Activated naive CD4-positive, alpha-beta T cell treated with anti-CD3 and anti-CD28 coated beads for 36 hours (primary cell): ENCODE measurements at regions of chr17 and their contacts with region 1.

Region 1: GRCh38 chr17:75109407-75110233 is at the start of gene ARMC7:
- DNase-seq: peak; percentile 93
- H3K4me3 Mint-ChIP-seq: peak within 1 kb of the TSS; percentile 90
- H3K27ac Mint-ChIP-seq: peak within 1 kb of the TSS; percentile 91
- H3K4me1 Mint-ChIP-seq: peaks cover 29% of the 10 kb centered on the region
- H3K27me3 Mint-ChIP-seq: no peaks in the 10 kb centered on the region
- total RNA-seq, gene ARMC7: 3.8 to 4.9 TPM

Region 2: GRCh38 chr17:74842599-74843351 is 266.8 kb before region 1 on chr17:
- CTCF ChIA-PET with region 1: no interaction called
- intact Hi-C with region 1: no loop called
- DNase-seq: no peak
- H3K4me3 Mint-ChIP-seq: no peak overlapping the region
- H3K27ac Mint-ChIP-seq: no peak overlapping the region
- H3K4me1 Mint-ChIP-seq: peaks cover 13% of the 10 kb centered on the region
- H3K27me3 Mint-ChIP-seq: peaks cover 10% of the 10 kb centered on the region

Region 3: GRCh38 chr17:75012346-75013091 is 97.1 kb before region 1 on chr17 and contains the start of gene MRPL58:
- CTCF ChIA-PET with region 1: interaction called, 24 read pairs
- intact Hi-C with region 1: no loop called
- DNase-seq: peak; percentile 86
- H3K4me3 Mint-ChIP-seq: peak within 1 kb of the TSS; percentile 91
- H3K27ac Mint-ChIP-seq: peak within 1 kb of the TSS; percentile 81
- H3K4me1 Mint-ChIP-seq: peaks cover 35% of the 10 kb centered on the region
- H3K27me3 Mint-ChIP-seq: no peaks in the 10 kb centered on the region
- total RNA-seq, gene MRPL58: 60.6 to 64.5 TPM

Region 4: DNA sequence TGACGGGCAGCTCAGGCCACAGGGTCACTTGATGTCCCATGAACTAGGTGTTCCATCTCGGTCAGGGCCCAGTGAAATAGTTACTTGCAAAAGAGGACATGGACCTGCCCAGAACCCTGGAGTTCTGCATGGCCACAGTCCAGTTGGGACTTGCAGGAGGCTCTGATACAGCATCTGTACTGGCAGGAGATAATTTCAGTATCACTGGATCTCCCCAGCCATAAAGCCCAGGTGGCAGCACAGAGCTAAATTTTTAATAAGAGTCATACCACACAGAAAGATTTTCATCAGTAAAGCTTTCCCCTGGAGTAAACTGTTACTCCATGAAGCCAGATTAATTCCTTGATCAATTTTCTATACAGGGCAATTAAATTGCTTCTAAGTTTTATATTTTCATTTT is 39.8 kb before region 1 on chr17:
- CTCF ChIA-PET with region 1: interaction called, 11 read pairs
- intact Hi-C with region 1: loop called (anchors 5 kb)
- DNase-seq: peak; percentile 42
- H3K4me3 Mint-ChIP-seq: no peak overlapping the region
- H3K27ac Mint-ChIP-seq: no peak overlapping the region
- H3K4me1 Mint-ChIP-seq: peaks cover 32% of the 10 kb centered on the region
- H3K27me3 Mint-ChIP-seq: no peaks in the 10 kb centered on the region

Region 5: DNA sequence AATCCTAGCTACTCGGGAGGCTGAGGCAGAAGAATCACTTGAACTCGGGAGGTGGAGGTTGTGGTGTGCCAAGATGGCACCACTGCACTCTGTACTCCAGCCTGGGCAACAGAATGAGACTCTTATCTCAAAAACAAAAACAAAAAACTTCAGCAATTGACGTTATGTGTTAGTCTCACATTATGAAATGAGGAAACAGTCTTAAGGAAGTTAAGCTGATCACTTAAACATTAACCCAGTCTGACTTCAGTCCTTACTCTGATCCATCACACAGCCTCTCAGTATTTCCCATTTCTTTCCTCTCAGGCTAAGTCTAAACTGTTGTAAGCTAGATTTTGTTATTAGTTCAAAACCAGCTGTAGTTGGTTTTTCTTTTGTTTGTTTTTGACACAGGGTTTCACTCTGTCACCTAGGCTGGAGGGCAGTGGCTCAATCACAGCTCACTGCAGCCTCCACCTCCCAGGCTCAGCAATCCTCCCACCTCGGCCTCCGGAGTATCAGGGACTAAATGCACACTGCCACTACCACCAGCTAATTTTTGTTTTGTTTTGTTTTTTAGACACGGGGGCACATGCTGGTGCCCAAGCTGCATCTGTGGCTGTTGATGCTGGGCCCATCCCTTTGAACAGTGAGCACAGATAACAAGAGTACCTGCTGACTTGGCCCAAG is 38.4 kb after region 1 on chr17:
- CTCF ChIA-PET with region 1: interaction called, 13 read pairs
- intact Hi-C with region 1: no loop called
- DNase-seq: no peak
- H3K4me3 Mint-ChIP-seq: no peak overlapping the region
- H3K27ac Mint-ChIP-seq: no peak overlapping the region
- H3K4me1 Mint-ChIP-seq: peaks cover 19% of the 10 kb centered on the region
- H3K27me3 Mint-ChIP-seq: no peaks in the 10 kb centered on the region

Region 6: GRCh38 chr17:75191584-75191983 is 82.0 kb after region 1 on chr17:
- CTCF ChIA-PET with region 1: interaction called, 10 read pairs
- intact Hi-C with region 1: no loop called
- DNase-seq: no peak
- H3K4me3 Mint-ChIP-seq: no peak overlapping the region
- H3K27ac Mint-ChIP-seq: no peak overlapping the region
- H3K4me1 Mint-ChIP-seq: peaks cover 7% of the 10 kb centered on the region
- H3K27me3 Mint-ChIP-seq: no peaks in the 10 kb centered on the region

Region 7: DNA sequence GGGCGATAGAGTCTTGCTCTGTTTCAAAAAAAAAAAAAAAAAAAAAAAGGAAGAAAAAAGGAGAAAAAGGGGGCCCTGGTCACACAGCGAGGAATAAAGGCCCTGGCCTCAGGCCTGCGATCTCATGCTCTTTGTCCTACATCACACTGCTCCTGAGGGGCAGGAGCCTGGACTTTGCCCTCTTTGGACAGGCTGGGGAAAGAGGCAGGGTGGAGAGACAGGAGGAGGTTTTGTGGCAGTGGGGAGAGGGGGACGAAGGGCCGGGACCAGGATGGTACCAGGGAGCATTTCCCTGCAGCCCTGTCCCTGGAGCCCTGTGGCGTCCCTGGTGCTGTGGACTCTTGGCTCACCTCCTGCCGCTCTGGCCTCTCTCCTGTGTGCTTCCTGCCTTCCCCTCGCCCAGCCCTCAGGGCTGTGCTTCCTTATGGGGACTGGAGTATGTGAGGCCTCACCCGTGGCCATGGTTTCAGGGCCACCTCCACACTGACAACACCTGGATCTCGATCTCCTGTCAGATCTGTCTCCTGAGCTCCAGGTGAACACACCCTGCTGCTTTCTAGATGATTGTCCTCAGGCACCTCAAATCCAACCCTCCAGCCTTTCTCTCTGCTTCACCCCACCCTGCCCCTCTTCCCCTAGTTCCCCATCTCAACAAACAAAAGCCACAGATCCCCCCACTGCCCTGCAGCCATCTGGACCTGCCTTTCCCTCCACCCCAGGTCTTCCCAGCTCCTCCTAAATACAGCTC is 199.6 kb after region 1 on chr17:
- CTCF ChIA-PET with region 1: no interaction called
- intact Hi-C with region 1: no loop called
- DNase-seq: no peak
- H3K4me3 Mint-ChIP-seq: no peak overlapping the region
- H3K27ac Mint-ChIP-seq: no peak overlapping the region
- H3K4me1 Mint-ChIP-seq: peaks cover 12% of the 10 kb centered on the region
- H3K27me3 Mint-ChIP-seq: no peaks in the 10 kb centered on the region

Region 8: GRCh38 chr17:75405365-75406221 is 296.0 kb after region 1 on chr17 and contains the start of gene GRB2:
- CTCF ChIA-PET with region 1: interaction called, 3 read pairs
- intact Hi-C with region 1: loop called (anchors 10 kb)
- DNase-seq: peak; percentile 100
- H3K4me3 Mint-ChIP-seq: peak within 1 kb of the TSS; percentile 97
- H3K27ac Mint-ChIP-seq: peak within 1 kb of the TSS; percentile 97
- H3K4me1 Mint-ChIP-seq: peaks cover 38% of the 10 kb centered on the region
- H3K27me3 Mint-ChIP-seq: no peaks in the 10 kb centered on the region
- total RNA-seq, gene GRB2: 166 to 169 TPM

Region 9: DNA sequence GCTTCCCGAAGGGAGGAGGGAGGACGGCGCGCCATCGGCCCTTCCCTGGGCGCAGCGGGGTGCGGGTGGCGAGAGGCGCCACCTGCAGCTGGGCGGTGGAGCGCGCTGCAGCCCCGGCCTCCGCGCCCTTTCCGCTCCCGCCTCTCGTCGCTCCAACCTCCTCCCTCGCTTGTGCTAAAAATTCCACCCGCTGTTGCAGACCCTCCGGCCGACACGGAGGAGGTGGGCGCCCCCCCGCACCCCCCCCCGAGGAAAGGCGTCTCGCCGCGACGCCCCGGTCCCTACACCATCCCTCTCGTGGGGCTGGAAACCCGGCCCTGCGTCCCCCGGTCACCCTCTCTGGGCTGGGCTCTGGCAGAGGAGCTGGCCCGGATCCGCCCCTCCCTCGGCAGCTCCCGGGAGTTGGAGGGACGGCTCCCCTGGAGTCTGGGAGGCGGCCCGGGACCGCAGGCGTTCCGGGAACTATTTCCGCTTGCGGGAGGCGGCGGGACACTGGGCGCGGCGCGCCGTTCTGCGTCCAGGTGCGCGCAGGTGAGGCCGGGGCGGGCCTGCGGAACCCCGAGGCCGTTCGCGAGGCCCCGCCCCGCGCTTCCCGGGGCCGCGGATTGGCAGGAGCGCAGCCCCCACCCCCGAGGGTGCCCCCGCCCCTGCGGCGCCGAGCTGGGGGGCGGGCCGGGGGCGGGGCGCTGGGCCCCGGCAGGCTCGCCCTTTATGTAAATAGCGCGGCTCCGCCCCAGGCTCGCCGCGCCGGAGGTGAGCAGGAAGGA is 415.5 kb after region 1 on chr17 and contains the start of gene LLGL2:
- CTCF ChIA-PET with region 1: no interaction called
- intact Hi-C with region 1: no loop called
- DNase-seq: peak; percentile 74
- H3K4me3 Mint-ChIP-seq: peak within 1 kb of the TSS; percentile 58
- H3K27ac Mint-ChIP-seq: no peak within 1 kb of the TSS
- H3K4me1 Mint-ChIP-seq: peaks cover 9% of the 10 kb centered on the region
- H3K27me3 Mint-ChIP-seq: no peaks in the 10 kb centered on the region
- total RNA-seq, gene LLGL2: 6.2 to 6.8 TPM